Activated CD4-positive, alpha-beta T cell treated with anti-CD3 and anti-CD28 coated beads, Interleukin-2, amount 10 ng/mL, durations not matched to agents 24 days and 14 days (primary cell): ENCODE measurements at regions of chr3 and their contacts with region 1.

Region 1: DNA sequence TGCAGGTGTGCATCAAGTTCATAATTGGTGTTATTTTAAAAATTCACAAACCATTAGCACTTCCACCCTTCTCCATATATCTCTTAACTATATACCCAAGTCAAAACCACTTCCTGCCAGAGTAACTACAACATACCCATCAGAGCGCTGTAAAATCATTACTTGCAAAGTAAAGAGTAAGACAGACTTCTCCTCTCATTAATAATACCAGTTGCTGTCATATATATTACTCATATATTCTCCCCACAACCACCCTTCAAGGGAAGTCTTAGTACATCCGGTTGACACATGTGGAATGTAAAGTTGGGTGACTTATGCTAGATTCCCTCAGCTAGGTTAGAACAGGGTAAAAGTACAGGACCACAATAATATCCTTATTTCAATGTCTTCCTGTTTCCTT is 5.6 kb downstream of the TERC start:
- DNase-seq: no peak
- H3K4me3 Mint-ChIP-seq: peak overlapping the region; percentile 19
- H3K27ac Mint-ChIP-seq: peak overlapping the region; percentile 26
- H3K4me1 Mint-ChIP-seq: peaks cover 18% of the 10 kb centered on the region
- H3K27me3 Mint-ChIP-seq: peaks cover 9% of the 10 kb centered on the region

Region 2: DNA sequence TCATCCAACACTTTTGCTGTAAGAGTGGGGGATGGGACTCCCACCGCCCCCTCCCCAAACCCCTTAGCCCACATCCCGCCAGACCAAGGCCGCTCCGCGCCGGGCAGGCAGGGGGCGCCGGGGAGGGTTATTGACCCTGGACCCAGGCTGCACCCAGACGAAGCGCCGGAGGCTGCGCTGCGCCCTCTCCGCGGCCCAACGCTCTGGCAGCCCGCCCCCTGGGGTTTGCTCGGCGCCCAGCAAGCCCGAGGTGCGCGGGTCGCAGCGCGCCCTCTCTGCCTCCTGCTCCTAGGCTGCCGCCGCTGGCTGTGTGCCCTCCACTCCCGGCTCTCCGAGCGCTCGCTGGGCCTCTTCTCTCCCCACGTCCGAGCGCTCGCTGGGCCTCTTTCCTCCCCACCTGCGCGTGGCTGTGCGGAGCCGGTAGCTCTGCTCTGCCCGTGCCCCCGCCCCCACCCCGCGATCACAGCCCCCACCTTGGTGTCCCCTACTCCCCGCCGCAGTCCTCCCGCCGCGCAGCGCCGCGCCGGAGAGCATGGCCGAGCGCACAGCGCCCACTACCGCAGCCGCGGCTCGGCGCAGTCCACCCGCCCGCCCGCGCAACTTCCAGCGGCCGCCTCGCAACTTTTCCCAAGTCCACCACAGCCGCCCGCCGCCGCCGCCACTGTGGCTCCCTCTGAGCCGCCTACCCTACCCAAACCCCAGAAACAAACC is 97.0 kb before region 1 on chr3:
- intact Hi-C with region 1: loop called (anchors 5 kb)
- DNase-seq: peak; percentile 76
- H3K4me3 Mint-ChIP-seq: peak overlapping the region; percentile 85
- H3K27ac Mint-ChIP-seq: no peak overlapping the region
- H3K4me1 Mint-ChIP-seq: peaks cover 38% of the 10 kb centered on the region
- H3K27me3 Mint-ChIP-seq: peaks cover 86% of the 10 kb centered on the region

Region 3: DNA sequence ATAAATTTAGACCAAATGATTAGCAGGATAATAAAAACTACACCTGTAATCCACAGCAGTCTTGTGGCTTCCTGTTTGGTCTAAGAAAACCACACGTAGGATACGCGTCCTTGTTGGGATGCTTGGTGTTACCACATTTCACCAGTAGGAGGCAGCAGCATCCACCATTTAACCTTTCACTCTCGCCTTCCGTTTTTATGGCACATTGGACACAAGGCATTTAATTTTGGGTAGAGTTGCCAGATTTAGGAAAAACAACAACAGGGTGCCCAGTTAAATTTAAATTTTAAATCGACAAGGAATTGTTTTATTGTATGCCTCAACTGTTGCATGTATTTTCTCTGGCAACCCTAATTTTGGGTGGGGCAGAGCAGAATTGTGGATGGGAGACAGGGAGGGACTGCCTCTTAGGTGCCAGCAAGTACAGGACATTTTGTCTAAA is 104.2 kb after region 1 on chr3:
- intact Hi-C with region 1: loop called (anchors 5 kb)
- DNase-seq: peak; percentile 90
- H3K4me3 Mint-ChIP-seq: no peak overlapping the region
- H3K27ac Mint-ChIP-seq: no peak overlapping the region
- H3K4me1 Mint-ChIP-seq: peaks cover 16% of the 10 kb centered on the region
- H3K27me3 Mint-ChIP-seq: peaks cover 19% of the 10 kb centered on the region